ENCODE measurements at regions of chr1 and their contacts with region 1.

Region 1: GRCh38 chr1:65265651-65266351 is 43.5 kb upstream of the DNAJC6 start:
- DNase-seq: peak; percentile 21 to 71 (median 50)
- ATAC-seq: peak; percentile 86 to 91
- H3K4me3 Mint-ChIP-seq: peak overlapping the region; percentile 76 to 89 (median 82)
- H3K27ac Mint-ChIP-seq: peak overlapping the region in 6 of 10 donors; percentile 61 to 86 (median 76)
- H3K4me1 Mint-ChIP-seq: peaks cover 4 to 22% (median 18%) of the 10 kb centered on the region in 4 donors
- H3K27me3 Mint-ChIP-seq: peaks cover 0 to 30% (median 5%) of the 10 kb centered on the region in 5 donors

Region 2: GRCh38 chr1:65198096-65198495 is 67.7 kb before region 1 on chr1:
- POLR2A ChIA-PET with region 1: no interaction called
- DNase-seq: no peak
- ATAC-seq: no peak
- H3K4me3 Mint-ChIP-seq: no peak overlapping the region
- H3K27ac Mint-ChIP-seq: no peak overlapping the region
- H3K4me1 Mint-ChIP-seq: peaks cover 0 to 2% (median 0%) of the 10 kb centered on the region in 4 donors
- H3K27me3 Mint-ChIP-seq: peaks cover 3 to 12% (median 11%) of the 10 kb centered on the region in 5 donors

Region 3: DNA sequence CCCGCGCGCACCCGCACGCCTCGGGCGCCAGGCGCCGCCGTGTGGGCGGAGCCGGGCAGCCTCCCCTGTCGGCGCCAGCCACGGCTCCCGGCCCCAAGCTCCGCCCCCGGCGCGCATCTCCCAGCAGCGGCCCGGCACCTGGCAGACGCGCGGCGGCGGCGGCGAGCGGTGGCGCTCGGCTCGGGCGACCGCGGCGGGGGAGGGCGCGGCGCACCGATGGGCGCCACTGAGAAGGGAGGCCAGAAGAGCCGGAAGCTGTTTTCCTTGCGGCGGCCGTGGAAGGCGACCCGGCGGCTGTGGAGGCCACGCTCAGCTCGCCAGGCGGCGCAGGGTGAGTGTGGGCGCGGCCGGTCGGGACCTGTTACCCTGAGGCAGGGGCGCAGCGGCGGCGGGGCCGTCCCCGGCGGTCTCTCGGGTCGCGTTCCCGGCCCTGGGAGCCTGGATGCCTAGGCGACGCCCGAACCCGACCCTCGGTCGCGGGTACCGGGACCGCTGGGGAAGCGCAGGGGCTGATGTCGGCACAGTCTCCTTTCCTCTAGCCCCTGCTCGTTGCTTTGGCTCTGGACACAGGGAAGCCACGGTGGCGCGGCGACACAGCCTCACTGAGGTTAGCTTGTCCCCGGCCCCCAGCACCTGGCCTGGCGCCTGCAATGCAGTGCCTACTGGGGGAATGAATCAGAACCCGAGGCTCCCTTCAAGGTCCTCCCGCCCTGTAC is 11.3 kb before region 1 on chr1:
- POLR2A ChIA-PET with region 1: interaction called, 21 read pairs
- DNase-seq: peak; percentile 74 to 89 (median 84)
- ATAC-seq: peak; percentile 95
- H3K4me3 Mint-ChIP-seq: peak overlapping the region; percentile 74 to 99 (median 91)
- H3K27ac Mint-ChIP-seq: peak overlapping the region in 5 of 10 donors; percentile 11 to 89 (median 83)
- H3K4me1 Mint-ChIP-seq: peaks cover 6 to 21% (median 17%) of the 10 kb centered on the region in 4 donors
- H3K27me3 Mint-ChIP-seq: peaks cover 0 to 8% (median 2%) of the 10 kb centered on the region in 5 donors

Region 4: DNA sequence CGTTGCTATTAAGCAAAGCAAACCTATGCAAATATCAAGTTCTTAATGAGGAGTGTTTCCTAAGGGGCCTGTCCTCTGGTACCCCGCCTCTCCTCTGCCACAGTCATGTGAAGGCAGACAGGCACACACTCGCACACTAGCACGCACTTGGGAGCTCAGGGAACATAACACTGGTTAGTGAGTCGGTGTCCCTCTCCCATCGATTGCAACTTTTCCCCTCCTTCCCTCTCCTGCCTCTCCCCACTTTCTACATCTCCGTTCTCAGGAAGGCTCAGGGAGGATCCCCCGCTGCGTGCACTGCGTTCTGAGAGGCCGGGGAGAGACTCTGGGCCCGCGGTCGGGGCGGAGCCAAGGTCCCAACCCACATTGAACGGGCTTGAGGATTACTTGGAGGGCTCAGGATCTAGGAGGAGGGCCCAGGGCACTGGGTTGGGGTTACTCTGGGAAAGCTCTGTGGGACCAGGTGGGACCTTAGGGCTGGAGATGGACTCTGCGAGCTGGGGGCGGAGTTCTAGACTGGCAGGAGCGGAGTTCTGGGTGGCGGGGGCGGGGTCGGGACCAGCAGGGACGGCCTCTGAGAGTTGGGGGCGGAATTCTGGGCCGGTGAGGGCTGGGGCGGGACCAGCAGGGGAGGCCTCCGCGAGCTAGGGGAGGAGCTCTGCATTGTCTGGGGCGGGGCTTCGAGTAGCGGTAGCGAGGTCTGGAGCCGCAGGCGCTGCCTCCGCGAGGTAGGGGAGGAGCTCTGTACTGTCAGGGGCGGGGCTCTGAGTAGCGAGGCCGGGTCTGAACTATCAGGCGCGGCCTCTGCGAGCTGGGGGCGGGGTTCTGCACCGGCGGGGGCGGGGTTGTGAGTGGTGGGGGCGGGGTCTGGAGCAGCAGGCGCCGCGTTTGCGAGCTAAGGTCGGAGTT is 154.1 kb after region 1 on chr1:
- POLR2A ChIA-PET with region 1: interaction called, 23 read pairs
- DNase-seq: peak; percentile 92 to 99 (median 98)
- ATAC-seq: peak; percentile 87 to 92
- H3K4me3 Mint-ChIP-seq: peak overlapping the region in 1 of 10 donors; percentile 96
- H3K27ac Mint-ChIP-seq: peak overlapping the region in 7 of 10 donors; percentile 85 to 98 (median 96)
- H3K4me1 Mint-ChIP-seq: peaks cover 5 to 23% (median 20%) of the 10 kb centered on the region in 4 donors
- H3K27me3 Mint-ChIP-seq: peaks cover 0 to 3% (median 0%) of the 10 kb centered on the region in 5 donors

Measured in naive thymus-derived CD8-positive, alpha-beta T cell (primary cell).